ENCODE measurements at regions of chr12 and their contacts with region 1.

Region 1: DNA sequence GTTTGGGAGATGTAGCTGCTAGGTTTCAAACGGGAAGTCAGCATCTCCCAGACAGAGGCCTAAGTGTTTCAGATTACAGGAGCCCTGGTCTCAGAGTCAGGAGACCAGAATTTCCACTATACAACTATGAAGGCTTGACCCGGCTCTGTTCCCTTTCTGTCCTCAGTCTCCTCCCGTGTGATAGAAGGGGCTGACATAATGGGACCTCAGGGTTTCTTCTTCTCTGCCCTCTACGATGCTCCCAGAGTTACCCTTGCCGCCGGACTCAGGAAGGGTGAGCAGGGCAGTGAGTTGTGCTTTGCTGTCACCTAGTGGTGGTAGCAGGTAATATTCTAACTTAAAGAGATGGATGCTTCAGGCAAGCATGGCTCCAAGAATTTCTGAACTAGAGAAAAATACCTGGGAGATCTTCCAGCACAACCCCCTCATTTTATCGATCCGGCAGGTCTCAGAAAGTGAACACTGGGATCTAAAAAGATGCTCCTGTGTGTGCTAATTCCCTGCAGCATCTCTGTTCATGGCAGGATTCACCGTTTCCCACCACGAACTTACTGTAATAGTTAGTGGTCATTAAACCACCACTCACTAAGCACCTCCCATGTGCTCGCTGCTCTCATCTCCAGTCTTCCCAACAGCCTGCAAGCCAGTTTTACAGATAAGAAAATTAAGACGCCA is 84.4 kb downstream of the VWF start:
- DNase-seq: peak; percentile 60
- ATAC-seq: peak; percentile 72
- H3K4me3 Mint-ChIP-seq: no peak overlapping the region
- H3K27ac Mint-ChIP-seq: no peak overlapping the region
- H3K4me1 Mint-ChIP-seq: peaks cover 17% of the 10 kb centered on the region
- H3K27me3 Mint-ChIP-seq: peaks cover 11% of the 10 kb centered on the region
- CTCF ChIP-seq: peak; percentile 79

Region 2: DNA sequence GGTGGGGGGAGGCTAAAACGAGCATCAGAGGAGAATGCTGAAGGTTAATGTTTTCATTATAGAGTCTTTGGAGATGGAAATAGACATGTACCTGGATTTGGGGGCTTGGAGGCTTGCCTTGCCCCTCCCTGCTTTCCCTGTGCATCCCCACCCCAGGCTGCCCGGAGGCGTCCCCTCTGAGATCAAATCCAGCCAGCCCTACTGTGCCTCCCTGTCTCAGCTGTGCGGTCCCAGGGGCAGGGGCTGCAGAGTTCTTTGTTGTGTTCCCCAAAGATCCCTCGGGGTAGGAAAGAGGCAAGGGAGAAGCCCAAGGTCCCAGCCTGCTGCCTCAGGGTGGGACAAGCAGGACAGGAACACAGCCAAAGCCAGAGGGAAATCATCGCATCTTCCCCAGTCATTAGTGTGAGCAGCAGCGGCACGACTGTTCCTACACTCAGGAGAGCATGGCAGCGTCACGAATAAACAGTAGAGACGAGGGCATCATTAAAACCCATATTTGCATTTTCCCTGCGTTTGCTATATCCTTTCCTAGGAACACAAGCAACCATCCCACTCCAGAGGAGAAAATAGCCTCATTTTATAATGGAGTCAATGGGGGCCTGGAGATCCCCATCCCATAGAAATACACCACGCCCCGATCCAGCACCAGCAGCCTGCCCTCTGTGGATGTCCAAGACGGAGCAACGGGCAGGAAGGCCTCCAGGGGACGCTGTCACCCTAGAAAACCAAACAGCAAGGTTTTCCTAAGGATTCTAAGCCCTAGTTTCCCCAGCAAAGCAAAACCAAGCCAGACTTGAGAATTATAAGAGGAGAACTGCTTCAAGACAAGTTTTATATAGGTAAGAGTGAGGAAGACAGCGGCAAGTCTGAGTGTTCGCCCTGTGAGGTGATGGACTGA is 127.3 kb before region 1 on chr12:
- CTCF ChIA-PET with region 1: interaction called, 17 read pairs
- POLR2A ChIA-PET with region 1: no interaction called
- DNase-seq: peak; percentile 85
- ATAC-seq: peak; percentile 96
- H3K4me3 Mint-ChIP-seq: no peak overlapping the region
- H3K27ac Mint-ChIP-seq: no peak overlapping the region
- H3K4me1 Mint-ChIP-seq: no peaks in the 10 kb centered on the region
- H3K27me3 Mint-ChIP-seq: no peaks in the 10 kb centered on the region
- CTCF ChIP-seq: peak; percentile 84

Region 3: GRCh38 chr12:5973461-5974130 is 66.4 kb before region 1 on chr12:
- CTCF ChIA-PET with region 1: interaction called, 11 read pairs
- POLR2A ChIA-PET with region 1: no interaction called
- DNase-seq: no peak
- ATAC-seq: no peak
- H3K4me3 Mint-ChIP-seq: no peak overlapping the region
- H3K27ac Mint-ChIP-seq: no peak overlapping the region
- H3K4me1 Mint-ChIP-seq: no peaks in the 10 kb centered on the region
- H3K27me3 Mint-ChIP-seq: peaks cover 3% of the 10 kb centered on the region; the same call in 1 of the 2 replicates
- CTCF ChIP-seq: no peak

Region 4: GRCh38 chr12:6018265-6018664 is 21.8 kb before region 1 on chr12:
- CTCF ChIA-PET with region 1: interaction called, 10 read pairs
- POLR2A ChIA-PET with region 1: no interaction called
- DNase-seq: no peak
- ATAC-seq: no peak
- H3K4me3 Mint-ChIP-seq: no peak overlapping the region
- H3K27ac Mint-ChIP-seq: no peak overlapping the region
- H3K4me1 Mint-ChIP-seq: no peaks in the 10 kb centered on the region
- H3K27me3 Mint-ChIP-seq: no peaks in the 10 kb centered on the region; the same call in 1 of the 2 replicates
- CTCF ChIP-seq: no peak

Region 5: DNA sequence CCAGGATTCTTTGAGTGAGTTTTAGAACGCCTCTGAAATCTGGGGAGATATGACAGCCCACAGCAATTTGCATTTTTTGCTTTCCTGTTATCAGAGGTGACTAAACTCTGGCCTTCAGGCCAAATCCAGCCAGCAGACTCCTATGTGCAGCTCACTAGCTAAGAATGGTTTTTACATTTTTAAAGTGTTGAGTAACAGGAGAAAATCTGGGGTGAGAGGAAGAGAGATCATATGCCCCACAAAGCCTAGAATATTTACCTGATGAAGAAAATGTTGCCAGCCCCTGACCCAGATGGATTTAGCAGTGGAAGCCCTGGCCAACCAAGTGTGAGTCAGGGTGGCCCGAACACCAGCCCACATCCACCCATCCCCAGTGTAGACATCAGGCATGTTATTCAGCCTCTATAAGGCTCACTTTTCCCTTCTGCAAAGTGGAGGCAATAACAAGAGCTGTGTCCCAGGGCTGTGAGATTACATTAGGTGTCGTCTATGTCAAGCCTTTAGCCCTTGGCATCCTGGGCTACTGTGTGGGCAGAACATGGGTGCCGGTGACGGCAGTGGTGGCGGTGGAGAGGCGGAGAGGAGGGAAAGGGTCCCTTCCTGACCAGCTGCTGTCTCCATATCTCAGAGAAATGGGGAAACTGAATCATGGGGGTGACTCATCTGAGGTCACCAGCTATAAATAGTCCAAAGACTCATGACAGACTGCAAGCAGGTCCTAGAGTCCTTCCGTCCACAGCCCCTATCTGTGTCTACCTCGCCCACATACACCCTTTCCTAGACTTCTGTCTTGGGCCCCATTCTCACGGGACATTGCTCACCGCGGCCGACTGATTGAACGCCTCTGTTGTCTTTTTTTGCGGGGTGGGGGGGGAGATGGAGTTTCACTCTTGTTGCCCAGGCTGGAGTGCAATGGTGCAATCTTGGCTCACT is 127.6 kb after region 1 on chr12:
- CTCF ChIA-PET with region 1: no interaction called
- POLR2A ChIA-PET with region 1: no interaction called
- DNase-seq: no peak
- ATAC-seq: no peak
- H3K4me3 Mint-ChIP-seq: no peak overlapping the region
- H3K27ac Mint-ChIP-seq: no peak overlapping the region
- H3K4me1 Mint-ChIP-seq: no peaks in the 10 kb centered on the region
- H3K27me3 Mint-ChIP-seq: no peaks in the 10 kb centered on the region
- CTCF ChIP-seq: no peak

Region 6: DNA sequence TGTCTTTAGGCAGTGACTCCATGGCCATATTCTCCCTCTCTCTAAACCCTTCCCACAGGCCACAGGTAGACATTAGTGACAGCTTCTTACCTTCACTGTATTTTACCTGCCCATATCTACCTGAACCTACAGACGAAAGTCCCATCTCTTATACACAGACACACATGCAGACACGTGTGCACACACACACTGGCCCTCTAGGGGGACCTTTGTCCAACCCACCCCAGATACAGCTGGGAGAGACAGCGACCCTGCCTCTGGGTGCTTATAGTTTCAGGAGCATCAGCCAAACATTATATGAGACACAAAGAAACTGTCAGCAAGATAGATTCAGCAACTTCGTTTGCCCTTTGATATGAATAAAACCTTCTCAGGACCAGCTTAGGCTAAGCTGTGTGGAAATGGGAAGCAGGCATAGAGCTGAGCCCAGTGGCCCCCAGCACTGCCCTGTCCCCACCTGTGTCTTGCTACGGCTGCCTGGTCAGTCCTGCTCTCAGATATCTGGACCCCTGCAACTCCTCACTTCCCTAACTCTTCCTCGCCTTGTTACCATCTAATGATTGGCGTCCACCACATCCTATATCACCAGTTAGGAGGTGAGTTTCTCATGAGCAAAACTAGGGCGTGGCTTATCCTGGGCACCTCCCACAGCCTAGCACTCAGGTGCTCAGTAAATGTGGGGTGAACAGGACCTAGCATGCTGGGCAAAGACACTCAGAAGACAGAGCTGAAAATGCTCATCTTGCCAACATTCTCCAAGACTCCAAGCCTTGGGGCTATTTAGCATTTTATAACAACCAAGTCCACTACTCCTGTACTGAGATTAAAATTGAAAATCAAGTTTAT is 148.1 kb after region 1 on chr12:
- CTCF ChIA-PET with region 1: no interaction called
- POLR2A ChIA-PET with region 1: no interaction called
- DNase-seq: no peak
- ATAC-seq: peak; percentile 49
- H3K4me3 Mint-ChIP-seq: no peak overlapping the region
- H3K27ac Mint-ChIP-seq: no peak overlapping the region
- H3K4me1 Mint-ChIP-seq: peaks cover 27% of the 10 kb centered on the region
- H3K27me3 Mint-ChIP-seq: no peaks in the 10 kb centered on the region; the same call in 1 of the 2 replicates
- CTCF ChIP-seq: no peak

Region 7: DNA sequence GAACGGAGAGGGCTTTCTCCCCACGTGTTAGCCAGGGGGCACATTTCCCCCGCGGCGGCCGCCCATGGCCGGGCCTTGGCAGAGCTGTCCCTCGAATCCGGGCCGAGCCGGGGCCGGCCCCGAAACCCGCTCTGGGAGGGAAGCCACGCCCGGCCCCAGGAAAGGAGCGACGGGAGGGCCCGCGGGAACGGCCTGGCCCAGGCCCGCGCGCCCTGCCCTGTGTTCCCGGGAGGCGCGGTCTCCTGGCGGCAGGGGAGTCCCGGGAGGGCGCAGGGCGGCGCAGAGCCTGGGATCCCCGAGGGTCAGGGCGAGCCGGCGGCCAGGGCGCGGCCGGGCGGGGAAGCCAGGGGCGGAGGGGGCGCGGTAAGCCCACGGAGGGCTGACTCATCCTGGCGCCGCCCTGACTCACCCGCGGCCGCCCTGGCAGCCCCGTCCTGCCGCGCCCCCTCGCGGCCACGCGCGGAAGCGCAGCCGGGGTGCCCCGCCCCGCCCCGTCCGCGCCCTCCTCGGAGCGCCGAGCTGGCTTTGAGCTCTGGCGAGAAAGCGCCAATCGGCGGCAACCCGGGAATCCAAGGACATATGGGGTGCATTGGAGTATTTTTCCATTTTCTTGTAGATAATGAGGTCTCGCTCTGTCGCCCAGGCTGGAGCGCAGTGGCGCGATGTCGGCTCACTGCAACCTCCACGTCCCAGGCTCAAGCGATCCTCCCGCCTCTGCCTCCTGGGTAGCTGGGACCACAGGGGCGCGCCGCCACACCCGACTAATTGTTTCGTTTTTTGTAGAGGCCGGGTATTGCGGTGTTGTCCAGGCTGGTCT is 238.6 kb after region 1 on chr12:
- CTCF ChIA-PET with region 1: interaction called, 20 read pairs
- POLR2A ChIA-PET with region 1: no interaction called
- DNase-seq: peak; percentile 85
- ATAC-seq: peak; percentile 65
- H3K4me3 Mint-ChIP-seq: peak overlapping the region; percentile 76
- H3K27ac Mint-ChIP-seq: no peak overlapping the region
- H3K4me1 Mint-ChIP-seq: peaks cover 59% of the 10 kb centered on the region
- H3K27me3 Mint-ChIP-seq: peaks cover 5% of the 10 kb centered on the region
- CTCF ChIP-seq: peak; percentile 99